ENCODE measurements at regions of chr22 and their contacts with region 1.

Region 1: DNA sequence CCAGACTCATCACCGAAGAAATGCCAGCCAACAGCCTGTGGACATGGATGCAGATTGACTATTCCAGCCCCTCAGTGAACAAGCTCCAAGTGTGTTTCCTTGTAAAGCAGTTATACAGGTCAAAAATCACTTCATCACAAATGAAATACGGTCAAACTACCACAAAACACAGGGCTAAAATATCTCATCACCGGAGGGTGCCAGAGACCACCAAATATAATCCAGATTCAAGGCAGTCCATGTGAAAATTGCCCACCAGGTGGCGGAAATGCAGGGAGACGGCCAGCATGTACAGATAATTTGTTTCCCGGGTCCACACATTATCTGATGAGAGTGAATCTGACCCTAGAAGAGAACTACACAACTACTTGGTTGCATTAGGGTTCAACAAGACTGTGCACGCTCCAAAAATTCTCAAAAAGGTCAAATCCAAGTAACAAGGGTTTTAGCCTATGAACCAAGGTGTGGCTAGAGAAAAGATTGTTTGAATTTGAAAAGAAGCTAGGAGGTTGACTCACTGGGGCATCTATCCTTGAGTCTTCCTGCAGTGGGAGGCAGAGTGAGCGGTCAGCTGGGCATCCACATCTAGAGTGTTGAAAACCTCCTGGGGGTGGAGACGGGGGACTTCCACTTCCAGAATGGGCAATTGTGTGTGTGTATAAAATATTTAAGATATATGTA is 71.7 kb downstream of the IGLL5 start:
- DNase-seq: peak; percentile 85
- ATAC-seq: peak; percentile 70
- H3K4me3 Mint-ChIP-seq: no peak overlapping the region
- H3K27ac Mint-ChIP-seq: no peak overlapping the region
- H3K4me1 Mint-ChIP-seq: peaks cover 3% of the 10 kb centered on the region
- H3K27me3 Mint-ChIP-seq: peaks cover 24% of the 10 kb centered on the region

Region 2: DNA sequence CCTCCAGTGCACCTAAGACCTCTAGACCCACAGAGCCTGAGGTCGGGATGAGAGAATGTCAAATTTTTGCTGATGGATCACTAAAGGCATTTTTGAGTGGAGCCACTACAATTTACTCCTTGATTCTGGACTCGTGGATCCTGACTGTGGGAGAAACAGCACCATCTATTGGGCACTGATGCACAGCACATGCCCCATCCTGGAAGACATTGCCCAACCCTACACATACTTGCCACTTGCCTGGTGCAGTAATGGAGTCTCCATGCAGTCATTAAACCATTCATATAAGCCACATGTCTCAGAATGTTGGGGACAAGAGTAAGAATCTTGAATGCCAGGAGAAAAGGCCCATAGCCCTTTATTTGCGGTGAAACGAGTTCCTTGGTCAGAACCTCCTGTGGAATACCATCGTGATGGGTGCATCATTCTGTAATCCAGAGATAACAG is 211.0 kb before region 1 on chr22:
- CTCF ChIA-PET with region 1: interaction called, 36 read pairs
- POLR2A ChIA-PET with region 1: no interaction called
- intact Hi-C with region 1: loop called (anchors 1 to 2 kb)
- DNase-seq: peak; percentile 60
- ATAC-seq: peak; percentile 79
- H3K4me3 Mint-ChIP-seq: no peak overlapping the region
- H3K27ac Mint-ChIP-seq: no peak overlapping the region
- H3K4me1 Mint-ChIP-seq: peaks cover 6% of the 10 kb centered on the region
- H3K27me3 Mint-ChIP-seq: no peaks in the 10 kb centered on the region

Region 3: GRCh38 chr22:22787786-22788459 is 171.4 kb before region 1 on chr22:
- CTCF ChIA-PET with region 1: interaction called, 38 read pairs
- POLR2A ChIA-PET with region 1: no interaction called
- intact Hi-C with region 1: loop called in 1 of 2 experiments (anchors 1 kb)
- DNase-seq: peak; percentile 83
- ATAC-seq: peak; percentile 88
- H3K4me3 Mint-ChIP-seq: no peak overlapping the region
- H3K27ac Mint-ChIP-seq: no peak overlapping the region
- H3K4me1 Mint-ChIP-seq: peaks cover 44% of the 10 kb centered on the region
- H3K27me3 Mint-ChIP-seq: no peaks in the 10 kb centered on the region

Region 4: GRCh38 chr22:22884010-22884887 is 75.0 kb before region 1 on chr22:
- CTCF ChIA-PET with region 1: interaction called, 10 read pairs
- POLR2A ChIA-PET with region 1: no interaction called
- intact Hi-C with region 1: loop called in 1 of 2 experiments (anchors 2 kb)
- DNase-seq: peak; percentile 79
- ATAC-seq: peak; percentile 56
- H3K4me3 Mint-ChIP-seq: no peak overlapping the region
- H3K27ac Mint-ChIP-seq: no peak overlapping the region
- H3K4me1 Mint-ChIP-seq: peaks cover 12% of the 10 kb centered on the region
- H3K27me3 Mint-ChIP-seq: peaks cover 7% of the 10 kb centered on the region

Region 5: DNA sequence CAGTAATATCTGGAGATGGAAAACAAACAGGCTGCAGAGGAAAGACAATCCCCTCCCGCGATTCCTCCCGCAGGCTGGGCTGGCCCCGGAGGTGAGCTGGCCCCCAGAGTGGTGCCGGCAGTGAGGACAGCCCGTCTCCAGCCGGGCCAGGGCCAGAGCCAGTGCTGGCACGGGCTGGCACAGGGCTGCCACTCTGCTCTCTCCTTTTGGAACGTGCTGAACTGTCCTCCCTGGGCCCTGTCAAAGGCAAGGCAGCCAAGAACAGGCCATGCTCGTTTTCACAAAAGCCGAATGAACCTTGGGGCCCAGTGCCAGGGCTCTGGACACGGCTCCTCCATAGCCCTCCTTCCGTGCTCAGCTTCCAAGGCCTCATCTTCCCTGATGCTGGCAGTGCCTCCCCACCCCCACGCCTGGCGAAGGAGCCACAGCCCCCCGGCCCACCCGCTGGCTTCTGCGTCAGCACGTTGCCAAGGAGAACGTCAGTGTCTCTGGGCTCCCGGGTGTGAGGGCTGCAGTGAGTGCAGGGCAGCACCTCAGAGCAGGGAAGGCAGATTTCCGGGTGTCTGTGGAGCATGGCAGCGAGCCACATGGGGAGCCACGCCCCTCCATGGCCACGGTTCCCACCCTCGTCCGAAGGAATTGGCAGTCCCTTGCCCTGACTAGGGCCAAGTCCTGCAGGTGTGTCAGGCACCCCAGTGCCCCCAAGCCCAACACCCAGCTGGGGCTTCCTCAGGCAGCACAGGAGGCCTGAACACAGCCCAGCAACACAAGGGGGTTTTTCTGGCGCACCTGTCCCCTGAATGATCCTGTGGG is 139.6 kb after region 1 on chr22:
- CTCF ChIA-PET with region 1: no interaction called
- POLR2A ChIA-PET with region 1: no interaction called
- intact Hi-C with region 1: no loop called
- DNase-seq: no peak
- ATAC-seq: no peak
- H3K4me3 Mint-ChIP-seq: no peak overlapping the region
- H3K27ac Mint-ChIP-seq: no peak overlapping the region
- H3K4me1 Mint-ChIP-seq: no peaks in the 10 kb centered on the region
- H3K27me3 Mint-ChIP-seq: no peaks in the 10 kb centered on the region

Region 6: DNA sequence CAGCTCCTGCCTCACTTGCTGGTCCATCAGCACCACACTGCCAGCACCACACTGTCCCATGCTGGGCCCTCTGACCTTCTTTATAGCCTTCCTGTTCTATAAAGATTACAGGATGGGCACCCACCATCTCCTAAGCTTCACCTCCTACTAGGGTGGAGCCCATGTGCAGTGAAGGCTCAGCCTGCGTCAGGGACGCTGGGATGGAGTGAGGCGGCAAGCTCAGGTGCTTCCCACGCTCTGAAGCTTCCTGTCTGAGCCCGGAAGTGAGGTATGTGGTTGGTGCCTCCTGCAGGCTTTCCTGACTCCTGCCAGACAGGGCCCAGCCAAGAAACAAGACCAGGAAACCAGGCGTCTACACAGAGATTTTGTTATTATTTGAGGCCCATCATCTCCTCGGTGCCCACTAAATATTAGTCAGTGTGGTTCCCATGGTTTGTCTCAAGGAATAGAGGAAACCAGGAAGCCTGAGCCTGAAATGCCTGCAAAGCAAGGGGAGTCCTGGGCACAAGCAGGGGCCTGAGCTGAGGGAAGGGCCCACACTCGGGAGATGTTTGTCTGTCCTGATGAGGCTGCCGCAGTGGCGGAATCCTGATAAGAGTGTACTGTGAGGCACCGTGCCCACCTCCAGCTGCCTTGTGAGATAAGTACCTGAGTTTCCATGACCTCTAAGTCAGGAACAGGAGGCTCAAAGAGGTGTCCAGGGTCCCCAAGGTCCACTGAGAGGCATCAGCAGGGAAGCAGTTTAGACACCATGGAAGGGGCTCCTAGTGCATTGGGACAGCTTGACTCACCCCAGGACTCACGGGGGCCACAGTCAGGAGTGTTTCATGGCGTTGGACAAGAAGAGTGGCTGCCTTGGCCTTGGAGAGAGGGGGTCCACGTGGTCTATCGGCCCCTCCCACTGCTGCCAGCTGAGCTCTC is 160.5 kb after region 1 on chr22:
- CTCF ChIA-PET with region 1: interaction called, 18 read pairs
- POLR2A ChIA-PET with region 1: no interaction called
- intact Hi-C with region 1: no loop called
- DNase-seq: peak; percentile 78
- ATAC-seq: peak; percentile 95
- H3K4me3 Mint-ChIP-seq: peak overlapping the region; percentile 33
- H3K27ac Mint-ChIP-seq: peak overlapping the region; percentile 90
- H3K4me1 Mint-ChIP-seq: peaks cover 16% of the 10 kb centered on the region
- H3K27me3 Mint-ChIP-seq: no peaks in the 10 kb centered on the region

Region 7: GRCh38 chr22:23281406-23282088 is 322.3 kb after region 1 on chr22:
- CTCF ChIA-PET with region 1: interaction called, 3 read pairs
- POLR2A ChIA-PET with region 1: no interaction called
- intact Hi-C with region 1: loop called in 1 of 2 experiments (anchors 10 kb)
- DNase-seq: peak; percentile 89
- ATAC-seq: peak; percentile 71
- H3K4me3 Mint-ChIP-seq: no peak overlapping the region
- H3K27ac Mint-ChIP-seq: no peak overlapping the region
- H3K4me1 Mint-ChIP-seq: peaks cover 25% of the 10 kb centered on the region
- H3K27me3 Mint-ChIP-seq: no peaks in the 10 kb centered on the region

Measured in activated CD4-positive, alpha-beta T cell treated with anti-CD3 and anti-CD28 coated beads for 36 hours (primary cell).